Endothelial cell of umbilical vein (primary cell): ENCODE measurements at regions of chr14 and their contacts with region 1.

Region 1: DNA sequence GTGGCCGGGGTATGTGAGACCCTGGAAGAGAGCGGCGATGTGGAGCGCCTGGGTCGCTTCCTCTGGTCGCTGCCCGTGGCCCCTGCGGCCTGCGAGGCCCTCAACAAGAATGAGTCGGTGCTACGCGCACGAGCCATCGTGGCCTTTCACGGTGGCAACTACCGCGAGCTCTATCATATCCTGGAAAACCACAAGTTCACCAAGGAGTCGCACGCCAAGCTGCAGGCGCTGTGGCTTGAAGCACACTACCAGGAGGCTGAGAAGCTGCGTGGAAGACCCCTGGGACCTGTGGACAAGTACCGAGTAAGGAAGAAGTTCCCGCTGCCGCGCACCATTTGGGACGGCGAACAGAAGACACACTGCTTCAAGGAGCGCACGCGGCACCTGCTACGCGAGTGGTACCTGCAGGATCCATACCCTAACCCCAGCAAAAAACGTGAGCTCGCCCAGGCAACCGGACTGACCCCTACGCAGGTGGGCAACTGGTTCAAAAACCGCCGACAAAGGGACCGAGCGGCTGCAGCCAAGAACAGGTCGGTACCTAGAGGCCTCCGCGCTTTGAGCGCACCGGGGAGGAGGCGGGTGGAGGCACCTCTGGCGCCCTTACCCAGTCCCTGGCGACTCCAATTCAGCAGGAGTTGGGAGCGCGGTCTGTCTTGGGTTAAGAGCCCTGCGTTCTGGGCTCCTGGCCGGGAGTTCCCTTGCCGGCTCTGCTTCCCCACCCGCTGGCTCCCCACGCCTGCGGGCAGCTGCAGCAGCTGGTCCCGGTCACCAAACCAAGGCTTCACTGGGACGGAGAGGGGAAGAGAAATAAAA is 700 bp downstream of the SIX6 start:
- DNase-seq: no peak
- H3K4me3 ChIP-seq: no peak overlapping the region
- H3K27ac ChIP-seq: no peak overlapping the region
- H3K4me1 ChIP-seq: peaks cover 2% of the 10 kb centered on the region
- H3K27me3 ChIP-seq: peaks cover 89 to 100% of the 10 kb centered on the region in 2 experiments
- CTCF ChIP-seq: no peak
- POLR2A ChIP-seq: no peak

Region 2: GRCh38 chr14:60485598-60486251 is 23.9 kb before region 1 on chr14 and contains the start of gene C14orf39:
- CTCF ChIA-PET with region 1: no interaction called
- POLR2A ChIA-PET with region 1: no interaction called
- dilution Hi-C with region 1: no loop called
- intact Hi-C with region 1: loop called (anchors 2 kb)
- DNase-seq: peak; percentile 34
- H3K4me3 ChIP-seq: peak within 1 kb of the TSS; percentile 11 to 27 (median 25)
- H3K27ac ChIP-seq: no peak within 1 kb of the TSS
- H3K4me1 ChIP-seq: no peaks in the 10 kb centered on the region
- H3K27me3 ChIP-seq: peaks cover 25 to 69% of the 10 kb centered on the region in 2 experiments
- CTCF ChIP-seq: no peak
- POLR2A ChIP-seq: no peak
- total RNA-seq, gene C14orf39: not detected in 2 replicates

Region 3: DNA sequence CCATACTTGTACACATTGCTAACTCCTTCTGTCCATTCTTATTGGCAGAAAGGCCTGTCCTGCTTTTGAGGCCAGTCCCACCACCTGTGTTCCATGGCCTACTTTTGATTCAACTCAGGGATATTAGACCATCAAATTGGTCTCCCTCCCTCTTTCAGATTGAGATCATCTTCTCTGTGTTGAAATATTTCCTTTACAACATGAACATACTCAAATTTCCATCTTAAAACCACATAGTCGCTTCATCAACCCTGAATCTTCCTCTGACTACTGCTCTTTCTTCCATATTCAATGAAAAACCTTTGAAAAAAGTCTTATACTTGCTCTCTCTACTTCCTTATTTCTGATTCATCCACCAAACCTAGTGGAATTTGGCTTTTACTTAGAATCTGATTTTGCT is 436.3 kb after region 1 on chr14:
- CTCF ChIA-PET with region 1: no interaction called
- POLR2A ChIA-PET with region 1: no interaction called
- dilution Hi-C with region 1: no loop called
- intact Hi-C with region 1: no loop called
- DNase-seq: no peak
- H3K4me3 ChIP-seq: no peak overlapping the region
- H3K27ac ChIP-seq: no peak overlapping the region
- H3K4me1 ChIP-seq: peaks cover 6% of the 10 kb centered on the region
- H3K27me3 ChIP-seq: no peaks in the 10 kb centered on the region
- CTCF ChIP-seq: no peak
- POLR2A ChIP-seq: no peak